ENCODE measurements at regions of chr3 and their contacts with region 1.

Region 1: GRCh38 chr3:3038201-3038991 is 71.8 kb downstream of the IL5RA start:
- DNase-seq: no peak
- ATAC-seq: no peak

Region 2: DNA sequence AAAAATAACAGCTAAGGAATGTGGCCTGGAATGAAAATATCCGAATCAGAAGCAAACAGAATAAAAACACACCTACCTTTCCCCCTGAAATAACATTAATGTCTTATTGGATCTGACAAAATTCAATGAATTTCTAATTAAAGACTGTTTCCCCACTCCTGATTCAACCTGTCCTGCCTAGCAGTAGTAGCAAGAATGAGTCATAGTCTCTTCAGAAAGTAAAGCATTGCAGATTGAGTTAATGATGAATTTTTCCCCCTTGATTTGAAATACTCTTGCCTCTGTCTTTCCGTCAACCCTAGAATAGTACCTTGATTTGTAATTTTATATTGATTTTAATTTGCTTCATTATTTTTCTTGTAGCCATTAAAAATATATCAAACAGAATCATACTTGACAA is 727.4 kb before region 1 on chr3:
- intact Hi-C with region 1: loop called (anchors 5 kb)
- DNase-seq: no peak
- ATAC-seq: no peak

Measured in sciatic nerve (tissue), 2 donors.